ENCODE measurements at regions of chr3 and their contacts with region 1.

Region 1: GRCh38 chr3:124014366-124014942 is 22.5 kb upstream of the ROPN1 start:
- DNase-seq: no peak
- ATAC-seq: no peak
- H3K4me3 ChIP-seq: no peak overlapping the region
- H3K27ac ChIP-seq: no peak overlapping the region
- H3K4me1 ChIP-seq: peaks cover 6% of the 10 kb centered on the region; the same call in 1 of the 2 replicates
- H3K27me3 ChIP-seq: peaks cover 0 to 1% of the 10 kb centered on the region in 2 experiments; a peak in 1 of 5 replicates
- CTCF ChIP-seq: no peak
- EP300 ChIP-seq: no peak
- POLR2A ChIP-seq: no peak
- RAD21 ChIP-seq: no peak

Region 2: DNA sequence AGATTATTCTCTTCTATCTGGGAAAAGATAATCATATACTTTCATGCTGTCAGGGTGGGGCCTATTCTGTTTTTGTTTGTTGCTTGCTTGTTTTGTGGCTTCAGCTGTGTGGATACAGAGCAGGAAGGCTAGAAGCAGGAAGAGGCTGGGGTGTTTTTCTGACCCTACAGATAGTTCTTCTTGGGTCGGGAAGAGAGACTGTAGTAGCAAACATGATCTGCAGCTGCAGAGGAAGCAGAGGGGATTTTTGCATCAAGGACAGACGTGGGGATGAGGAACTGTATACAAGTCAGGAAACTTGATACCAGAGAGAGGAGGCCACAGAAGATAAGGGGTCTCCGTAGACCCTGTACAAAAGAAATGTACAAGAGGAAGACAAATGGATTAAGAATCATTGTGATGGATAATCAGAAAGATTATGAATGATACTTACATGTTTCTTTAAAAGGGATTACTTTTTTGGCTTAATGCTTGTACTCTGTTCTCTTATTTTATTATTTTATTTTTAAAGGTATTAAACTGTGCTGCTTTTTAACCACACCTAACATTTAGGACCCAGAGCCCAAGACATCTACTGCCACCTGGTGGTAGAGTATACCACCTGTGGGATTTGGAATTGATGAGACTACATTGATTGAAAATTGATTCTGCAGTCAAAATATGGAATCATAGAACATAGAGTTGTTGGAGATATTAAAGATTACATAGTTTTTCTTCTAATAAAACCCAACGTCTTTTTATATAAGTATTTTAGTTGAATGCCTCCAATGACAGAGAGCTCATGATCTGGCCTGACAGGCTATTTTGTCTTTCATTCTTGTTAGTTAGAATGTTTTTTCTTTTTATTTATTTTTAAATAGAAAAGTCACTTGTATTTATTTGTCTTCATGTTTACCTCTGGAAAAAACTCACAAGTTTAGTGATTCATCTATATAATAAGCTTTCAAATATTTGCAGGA is 64.8 kb after region 1 on chr3:
- CTCF ChIA-PET with region 1: interaction called, 35 read pairs
- POLR2A ChIA-PET with region 1: no interaction called
- in situ Hi-C with region 1: loop called (anchors 5 kb)
- intact Hi-C with region 1: loop called (anchors 1 kb)
- DNase-seq: peak; percentile 40
- ATAC-seq: no peak
- H3K4me3 ChIP-seq: no peak overlapping the region
- H3K27ac ChIP-seq: no peak overlapping the region
- H3K4me1 ChIP-seq: no peaks in the 10 kb centered on the region
- H3K27me3 ChIP-seq: peaks cover 0 to 7% of the 10 kb centered on the region in 2 experiments; a peak in 2 of 5 replicates
- CTCF ChIP-seq: peak; percentile 60
- EP300 ChIP-seq: no peak
- POLR2A ChIP-seq: no peak
- RAD21 ChIP-seq: no peak

Region 3: DNA sequence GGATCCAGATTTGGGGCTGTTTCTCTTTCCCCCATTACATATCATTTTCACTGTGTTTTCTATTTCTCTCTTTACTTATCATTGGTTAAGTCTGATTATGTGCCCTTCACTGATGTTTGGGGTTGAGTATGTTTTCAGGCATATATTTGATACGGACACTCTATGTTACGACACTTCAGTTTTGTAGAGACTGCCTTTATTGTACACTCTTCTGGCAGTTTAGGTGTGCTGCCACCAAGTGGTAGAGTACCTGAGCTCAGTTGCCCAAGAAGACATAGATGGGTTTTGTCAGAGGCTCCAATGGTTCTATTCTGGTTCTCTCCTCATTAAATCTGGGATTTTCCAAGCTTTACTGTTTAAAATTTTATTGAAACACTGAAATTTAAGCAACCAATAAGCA is 232.5 kb after region 1 on chr3:
- CTCF ChIA-PET with region 1: no interaction called
- POLR2A ChIA-PET with region 1: no interaction called
- in situ Hi-C with region 1: loop called (anchors 25 kb)
- intact Hi-C with region 1: loop called (anchors 10 kb)
- DNase-seq: peak; percentile 43
- ATAC-seq: peak; percentile 80
- H3K4me3 ChIP-seq: no peak overlapping the region
- H3K27ac ChIP-seq: no peak overlapping the region
- H3K4me1 ChIP-seq: no peaks in the 10 kb centered on the region
- H3K27me3 ChIP-seq: peaks cover 0 to 4% of the 10 kb centered on the region in 2 experiments; a peak in 2 of 5 replicates
- CTCF ChIP-seq: peak; percentile 60
- EP300 ChIP-seq: no peak
- POLR2A ChIP-seq: no peak
- RAD21 ChIP-seq: 0 out of 2 replicates have a peak, but pooled peaks have one; percentile 17

Region 4: GRCh38 chr3:124281453-124282316 is 267.2 kb after region 1 on chr3:
- CTCF ChIA-PET with region 1: no interaction called
- POLR2A ChIA-PET with region 1: no interaction called
- in situ Hi-C with region 1: no loop called
- intact Hi-C with region 1: loop called (anchors 5 kb)
- DNase-seq: peak; percentile 10
- ATAC-seq: peak; percentile 72
- H3K4me3 ChIP-seq: no peak overlapping the region
- H3K27ac ChIP-seq: no peak overlapping the region
- H3K4me1 ChIP-seq: no peaks in the 10 kb centered on the region
- H3K27me3 ChIP-seq: peaks cover 0 to 2% of the 10 kb centered on the region in 2 experiments; a peak in 1 of 5 replicates
- CTCF ChIP-seq: peak; percentile 65
- EP300 ChIP-seq: no peak
- POLR2A ChIP-seq: no peak
- RAD21 ChIP-seq: no peak

Region 5: GRCh38 chr3:124467980-124468902 is 453.8 kb after region 1 on chr3:
- CTCF ChIA-PET with region 1: interaction called, 5 read pairs
- POLR2A ChIA-PET with region 1: no interaction called
- in situ Hi-C with region 1: loop called (anchors 5 kb)
- intact Hi-C with region 1: no loop called
- DNase-seq: peak; percentile 20
- ATAC-seq: peak; percentile 90
- H3K4me3 ChIP-seq: no peak overlapping the region
- H3K27ac ChIP-seq: no peak overlapping the region
- H3K4me1 ChIP-seq: no peaks in the 10 kb centered on the region
- H3K27me3 ChIP-seq: peaks cover 0 to 5% of the 10 kb centered on the region in 2 experiments; a peak in 1 of 5 replicates
- CTCF ChIP-seq: peak; percentile 89
- EP300 ChIP-seq: no peak
- POLR2A ChIP-seq: no peak
- RAD21 ChIP-seq: peak; percentile 79